Calu3 (cell line): ENCODE measurements at regions of chr18 and their contacts with region 1.

Region 1: GRCh38 chr18:11733031-11733430 is 44.0 kb downstream of the GNAL start:
- DNase-seq: peak; percentile 82
- H3K4me3 Mint-ChIP-seq: no peak overlapping the region
- H3K27ac Mint-ChIP-seq: no peak overlapping the region
- H3K4me1 Mint-ChIP-seq: no peaks in the 10 kb centered on the region
- H3K27me3 Mint-ChIP-seq: peaks cover 99% of the 10 kb centered on the region
- CTCF ChIP-seq: peak; percentile 96

Region 2: GRCh38 chr18:10391506-10391905 is 1341.5 kb before region 1 on chr18:
- CTCF ChIA-PET with region 1: no interaction called
- intact Hi-C with region 1: no loop called
- DNase-seq: no peak
- H3K4me3 Mint-ChIP-seq: no peak overlapping the region
- H3K27ac Mint-ChIP-seq: no peak overlapping the region
- H3K4me1 Mint-ChIP-seq: no peaks in the 10 kb centered on the region
- H3K27me3 Mint-ChIP-seq: peaks cover 60% of the 10 kb centered on the region
- CTCF ChIP-seq: no peak

Region 3: GRCh38 chr18:11654736-11655605 is 78.1 kb before region 1 on chr18:
- CTCF ChIA-PET with region 1: interaction called, 17 read pairs
- intact Hi-C with region 1: loop called (anchors 1 kb)
- DNase-seq: peak; percentile 75
- H3K4me3 Mint-ChIP-seq: no peak overlapping the region
- H3K27ac Mint-ChIP-seq: no peak overlapping the region
- H3K4me1 Mint-ChIP-seq: no peaks in the 10 kb centered on the region
- H3K27me3 Mint-ChIP-seq: peaks cover 93% of the 10 kb centered on the region
- CTCF ChIP-seq: peak; percentile 76

Region 4: GRCh38 chr18:11751310-11752115 is 18.5 kb after region 1 on chr18:
- CTCF ChIA-PET with region 1: interaction called, 13 read pairs
- intact Hi-C with region 1: no loop called
- DNase-seq: no peak
- H3K4me3 Mint-ChIP-seq: no peak overlapping the region
- H3K27ac Mint-ChIP-seq: no peak overlapping the region
- H3K4me1 Mint-ChIP-seq: no peaks in the 10 kb centered on the region
- H3K27me3 Mint-ChIP-seq: peaks cover 63% of the 10 kb centered on the region
- CTCF ChIP-seq: no peak

Region 5: GRCh38 chr18:11872479-11873136 is 139.6 kb after region 1 on chr18:
- CTCF ChIA-PET with region 1: interaction called, 14 read pairs
- intact Hi-C with region 1: loop called (anchors 1 kb)
- DNase-seq: peak; percentile 50
- H3K4me3 Mint-ChIP-seq: no peak overlapping the region
- H3K27ac Mint-ChIP-seq: no peak overlapping the region
- H3K4me1 Mint-ChIP-seq: peaks cover 6% of the 10 kb centered on the region
- H3K27me3 Mint-ChIP-seq: no peaks in the 10 kb centered on the region
- CTCF ChIP-seq: peak; percentile 60

Region 6: DNA sequence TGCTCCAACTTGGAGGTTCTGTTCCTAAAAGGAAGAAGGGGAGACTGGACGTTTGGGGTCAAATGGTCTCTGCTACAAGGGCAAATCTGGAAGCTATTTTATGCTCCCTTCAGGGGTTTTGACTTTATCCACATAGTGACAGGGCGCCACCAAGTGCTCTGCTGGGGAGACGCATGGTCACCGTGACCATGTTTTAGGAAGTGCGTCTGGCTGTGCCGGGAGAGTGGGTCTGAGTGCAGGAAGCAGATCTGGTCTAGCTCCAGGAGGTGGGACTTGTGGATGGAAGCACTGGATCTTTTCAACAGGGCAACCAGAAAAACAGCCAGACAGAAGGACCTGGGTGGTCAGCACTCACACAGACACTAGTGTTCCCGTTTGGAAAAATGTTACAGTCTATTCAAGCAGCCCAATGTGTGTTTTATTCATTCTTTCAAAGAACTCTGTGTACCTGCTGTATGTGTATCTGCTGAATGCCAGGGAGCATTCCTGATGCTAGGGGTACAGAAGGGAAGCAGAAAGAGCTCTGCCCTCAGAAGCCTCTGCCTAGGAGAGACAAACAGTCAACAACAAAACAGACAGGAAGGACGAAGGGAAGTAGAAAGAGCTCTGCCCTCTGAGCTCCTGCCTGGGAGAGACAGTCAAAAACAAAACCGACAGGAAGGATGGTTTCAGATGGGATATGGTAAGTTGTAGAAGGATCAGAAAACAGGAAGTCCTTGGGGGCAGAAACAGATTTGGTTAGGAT is 262.6 kb after region 1 on chr18:
- CTCF ChIA-PET with region 1: interaction called, 7 read pairs
- intact Hi-C with region 1: loop called (anchors 2 kb)
- DNase-seq: peak; percentile 68
- H3K4me3 Mint-ChIP-seq: no peak overlapping the region
- H3K27ac Mint-ChIP-seq: no peak overlapping the region
- H3K4me1 Mint-ChIP-seq: peaks cover 30% of the 10 kb centered on the region
- H3K27me3 Mint-ChIP-seq: no peaks in the 10 kb centered on the region
- CTCF ChIP-seq: peak; percentile 62

Region 7: DNA sequence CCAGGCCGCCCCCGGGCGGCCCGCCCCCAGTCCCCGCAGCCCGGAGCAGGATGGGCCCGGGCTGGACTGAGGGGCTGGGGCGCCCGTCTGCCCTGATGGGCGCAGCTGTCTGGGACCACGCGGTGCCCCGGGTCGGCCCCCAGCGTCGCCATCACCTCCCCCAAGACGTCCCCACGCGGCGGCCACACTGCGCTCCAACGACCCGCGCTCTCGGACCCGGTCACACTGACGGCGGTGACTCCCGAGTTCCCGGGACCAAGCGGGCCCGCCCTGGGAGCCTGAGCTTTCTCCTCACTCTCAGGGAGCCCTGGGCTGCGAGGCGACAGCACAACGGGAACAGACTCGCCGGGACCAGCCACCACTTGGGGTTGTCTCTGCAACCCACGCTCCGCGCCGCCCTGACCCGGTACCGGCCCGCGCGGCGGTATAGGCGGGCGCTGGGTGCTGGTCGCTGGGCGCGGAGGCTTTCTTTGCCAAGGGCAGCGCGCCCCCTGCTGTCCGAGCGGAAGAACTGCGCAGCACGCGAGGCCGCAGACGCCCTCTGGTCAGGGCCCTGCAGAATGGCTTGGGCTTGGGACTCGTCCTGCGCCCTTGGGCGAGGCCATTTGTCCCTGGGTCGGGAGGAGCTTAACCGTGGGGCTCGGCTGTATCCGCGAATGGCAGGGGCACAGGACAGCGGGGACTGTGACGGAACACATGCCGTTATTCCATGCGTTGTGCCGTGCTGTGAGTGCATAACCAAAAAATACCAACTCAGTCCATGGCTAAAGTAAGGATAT is 305.8 kb after region 1 on chr18:
- CTCF ChIA-PET with region 1: interaction called, 5 read pairs
- intact Hi-C with region 1: loop called (anchors 1 kb)
- DNase-seq: peak; percentile 85
- H3K4me3 Mint-ChIP-seq: peak overlapping the region; percentile 79
- H3K27ac Mint-ChIP-seq: no peak overlapping the region
- H3K4me1 Mint-ChIP-seq: peaks cover 8% of the 10 kb centered on the region
- H3K27me3 Mint-ChIP-seq: peaks cover 23% of the 10 kb centered on the region
- CTCF ChIP-seq: peak; percentile 99